ENCODE measurements at regions of chr21 and their contacts with region 1.

Region 1: DNA sequence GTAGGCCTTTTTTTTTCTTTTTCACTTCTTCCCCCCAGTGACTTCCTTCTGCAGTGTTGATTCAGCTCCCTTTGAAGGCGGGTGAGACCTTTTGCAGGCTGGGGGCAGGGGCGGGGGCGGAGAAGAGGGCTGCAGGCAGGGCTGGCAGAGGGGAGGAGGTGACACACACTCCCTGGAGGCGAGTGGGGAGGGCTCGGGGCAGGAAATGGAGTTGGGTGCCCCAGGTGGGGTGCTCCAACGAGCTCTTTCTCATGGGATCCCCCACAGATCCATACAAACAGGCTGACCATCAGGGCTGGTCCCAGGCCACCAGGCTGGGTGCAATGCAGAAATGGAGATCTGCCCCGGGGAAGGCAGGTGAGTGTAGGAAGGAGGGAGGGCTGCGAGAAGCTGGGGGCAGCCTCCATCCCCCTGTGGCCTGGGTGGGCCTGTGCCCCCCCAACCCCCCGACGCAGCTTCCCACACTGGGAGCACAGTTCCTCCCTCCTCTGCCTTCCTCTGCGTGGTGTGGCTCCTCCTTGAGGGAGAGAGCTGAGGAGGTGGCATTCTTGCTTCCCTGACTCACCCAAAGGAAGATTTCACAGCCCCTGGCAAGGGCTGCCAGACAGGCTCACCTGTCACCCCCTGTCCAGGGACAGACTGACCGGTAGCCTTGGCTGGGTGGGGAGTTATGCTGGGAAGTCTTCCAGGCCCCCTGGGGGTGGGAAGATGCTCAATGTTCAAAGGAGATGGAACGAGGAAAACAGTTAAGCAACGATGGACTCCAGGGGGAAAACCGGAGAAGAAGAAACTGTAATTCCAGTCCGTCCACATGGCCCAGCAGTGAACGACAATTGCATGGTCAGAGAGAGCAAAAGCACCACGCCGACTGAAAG is 7.1 kb upstream of the ITGB2 start:
- DNase-seq: peak; percentile 96
- H3K4me3 ChIP-seq: peak overlapping the region in 7 of 8 donors; percentile 27 to 86 (median 45)
- H3K27ac ChIP-seq: peak overlapping the region; percentile 85 to 97 (median 90)
- H3K4me1 ChIP-seq: peaks cover 44 to 100% (median 94%) of the 10 kb centered on the region in 6 donors
- H3K27me3 ChIP-seq: peaks cover 0 to 14% (median 0%) of the 10 kb centered on the region in 7 donors
- CTCF ChIP-seq: no peak
- POLR2A ChIP-seq: no peak

Region 2: GRCh38 chr21:44626262-44626661 is 301.6 kb before region 1 on chr21:
- intact Hi-C with region 1: no loop called
- DNase-seq: peak; percentile 73
- H3K4me3 ChIP-seq: no peak overlapping the region
- H3K27ac ChIP-seq: no peak overlapping the region
- H3K4me1 ChIP-seq: peaks cover 0 to 17% (median 4%) of the 10 kb centered on the region in 6 donors
- H3K27me3 ChIP-seq: peaks cover 0 to 31% (median 0%) of the 10 kb centered on the region in 7 donors
- CTCF ChIP-seq: no peak
- POLR2A ChIP-seq: no peak

Region 3: GRCh38 chr21:44892536-44893277 is 35.1 kb before region 1 on chr21:
- intact Hi-C with region 1: loop called (anchors 5 kb)
- DNase-seq: peak; percentile 93
- H3K4me3 ChIP-seq: no peak overlapping the region
- H3K27ac ChIP-seq: peak overlapping the region in 5 of 8 donors; percentile 26 to 61 (median 31)
- H3K4me1 ChIP-seq: peaks cover 0 to 80% (median 28%) of the 10 kb centered on the region in 6 donors
- H3K27me3 ChIP-seq: no peaks in the 10 kb centered on the region
- CTCF ChIP-seq: peak; percentile 85 to 96 (median 93)
- POLR2A ChIP-seq: no peak

Region 4: DNA sequence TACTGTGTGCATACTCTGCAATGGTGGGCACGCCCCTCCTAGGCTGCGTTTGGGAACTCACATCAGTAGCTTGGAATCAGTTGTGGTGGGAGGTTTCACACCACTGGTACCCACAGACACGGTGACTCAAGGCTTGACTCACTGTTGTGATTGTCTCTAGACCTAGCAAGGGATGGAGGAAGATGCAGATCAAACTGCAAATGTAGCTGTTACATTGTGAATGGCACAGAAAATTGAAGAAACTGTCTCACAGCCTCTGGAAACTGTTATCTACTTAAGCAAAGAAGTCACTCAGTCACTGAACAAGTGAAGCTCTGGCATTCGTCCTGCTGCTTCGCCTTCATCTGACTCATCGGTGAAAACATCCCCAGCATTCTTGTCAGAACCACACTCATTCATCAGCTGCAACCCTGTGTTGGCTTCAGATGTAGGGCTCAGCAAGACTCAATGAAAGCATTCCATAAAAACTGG is 300.4 kb after region 1 on chr21:
- intact Hi-C with region 1: no loop called
- DNase-seq: no peak
- H3K4me3 ChIP-seq: no peak overlapping the region
- H3K27ac ChIP-seq: peak overlapping the region in 1 of 8 donors; percentile 34
- H3K4me1 ChIP-seq: peaks cover 0 to 30% (median 14%) of the 10 kb centered on the region in 6 donors
- H3K27me3 ChIP-seq: peaks cover 0 to 9% (median 0%) of the 10 kb centered on the region in 7 donors
- CTCF ChIP-seq: no peak
- POLR2A ChIP-seq: no peak

Measured in spleen (tissue), 13 donors.